Body of pancreas (tissue), 4 donors: ENCODE measurements at regions of chr10 and their contacts with region 1.

Region 1: DNA sequence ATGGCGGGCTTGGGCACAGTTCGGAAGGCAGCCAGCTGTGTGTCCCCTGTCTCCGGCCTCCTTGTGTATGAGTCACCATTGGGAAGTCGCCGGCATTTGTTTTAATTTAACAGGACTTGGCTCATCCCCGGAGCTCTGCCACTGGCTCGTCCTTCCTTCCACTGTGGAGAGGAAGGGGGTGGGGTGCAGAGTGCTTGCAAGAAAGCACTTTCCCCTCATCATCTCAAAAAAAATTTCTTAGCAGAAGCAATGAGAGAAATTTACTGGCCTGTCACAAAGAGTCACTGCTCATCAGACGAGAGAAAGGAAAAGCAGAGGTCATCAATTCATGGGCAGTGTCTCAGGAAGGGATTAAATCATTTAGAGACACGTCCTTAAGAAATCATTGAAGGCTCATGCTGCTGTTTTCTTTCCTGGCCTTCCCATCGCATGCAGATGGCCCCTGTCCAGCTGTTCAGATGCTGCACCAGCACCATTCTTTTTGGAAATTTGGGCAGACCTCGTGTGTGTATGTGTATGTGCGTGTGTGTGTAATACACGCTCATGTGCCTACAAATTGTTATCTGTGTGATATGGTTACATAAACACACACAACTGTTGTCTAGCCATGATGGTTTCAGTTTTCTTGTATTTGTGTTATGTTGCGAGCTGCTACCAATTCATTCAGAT is 93.3 kb downstream of the BMS1 start:
- DNase-seq: peak in 1 of 4 donors; percentile 12
- ATAC-seq: no peak
- H3K4me3 ChIP-seq: no peak overlapping the region
- H3K27ac ChIP-seq: no peak overlapping the region
- H3K4me1 ChIP-seq: no peaks in the 10 kb centered on the region
- H3K27me3 ChIP-seq: no peaks in the 10 kb centered on the region
- CTCF ChIP-seq: no peak
- POLR2A ChIP-seq: no peak

Region 2: DNA sequence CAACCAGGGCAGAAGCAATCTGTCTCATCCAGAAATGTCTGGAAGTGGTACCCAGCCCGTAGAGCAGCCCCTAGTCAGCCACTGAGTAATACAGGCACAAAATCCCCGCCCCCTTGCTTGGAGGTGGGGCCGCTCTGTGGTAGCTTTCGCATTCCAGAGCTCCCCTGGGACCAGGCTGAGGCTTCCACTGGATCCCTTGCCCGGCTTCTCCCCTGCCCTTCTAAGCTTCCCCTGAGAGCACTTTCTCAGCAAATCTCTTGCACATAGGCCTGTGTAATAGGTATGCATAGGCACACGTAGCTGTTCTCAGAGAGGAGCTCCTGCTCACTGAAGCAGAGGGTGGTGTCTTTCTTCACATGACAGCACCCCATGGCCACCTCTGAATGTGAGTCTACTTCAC is 50.9 kb after region 1 on chr10:
- intact Hi-C with region 1: no loop called
- DNase-seq: peak in 1 of 4 donors; percentile 27
- ATAC-seq: no peak
- H3K4me3 ChIP-seq: no peak overlapping the region
- H3K27ac ChIP-seq: no peak overlapping the region
- H3K4me1 ChIP-seq: no peaks in the 10 kb centered on the region
- H3K27me3 ChIP-seq: no peaks in the 10 kb centered on the region
- CTCF ChIP-seq: no peak
- POLR2A ChIP-seq: no peak

Region 3: GRCh38 chr10:43048574-43049339 is 172.8 kb after region 1 on chr10:
- intact Hi-C with region 1: no loop called
- DNase-seq: no peak
- ATAC-seq: no peak
- H3K4me3 ChIP-seq: no peak overlapping the region
- H3K27ac ChIP-seq: no peak overlapping the region
- H3K4me1 ChIP-seq: no peaks in the 10 kb centered on the region
- H3K27me3 ChIP-seq: no peaks in the 10 kb centered on the region
- CTCF ChIP-seq: no peak
- POLR2A ChIP-seq: no peak

Region 4: GRCh38 chr10:43110338-43111086 is 234.6 kb after region 1 on chr10:
- intact Hi-C with region 1: loop called (anchors 5 kb)
- DNase-seq: peak in 1 of 4 donors; percentile 45
- ATAC-seq: no peak
- H3K4me3 ChIP-seq: no peak overlapping the region
- H3K27ac ChIP-seq: no peak overlapping the region
- H3K4me1 ChIP-seq: peaks cover 4% of the 10 kb centered on the region
- H3K27me3 ChIP-seq: no peaks in the 10 kb centered on the region
- CTCF ChIP-seq: no peak
- POLR2A ChIP-seq: no peak